PC-3 (cell line): ENCODE measurements at regions of chr18 and their contacts with region 1.

Region 1: GRCh38 chr18:26548429-26549262 is at the start of gene KCTD1:
- DNase-seq: peak; percentile 80
- ATAC-seq: peak; percentile 37
- H3K4me3 ChIP-seq: peak within 1 kb of the TSS; percentile 85
- H3K27ac ChIP-seq: peak within 1 kb of the TSS; percentile 12; the same call in 1 of the 2 replicates
- H3K4me1 ChIP-seq: peaks cover 45% of the 10 kb centered on the region
- H3K27me3 ChIP-seq: no peaks in the 10 kb centered on the region
- CTCF ChIP-seq: no peak
- total RNA-seq, gene KCTD1: 15.8 and 24.0 TPM in 2 replicates

Region 2: GRCh38 chr18:26090130-26091046 is 458.3 kb before region 1 on chr18 and contains the start of gene SS18:
- CTCF ChIA-PET with region 1: no interaction called
- POLR2A ChIA-PET with region 1: no interaction called
- intact Hi-C with region 1: loop called (anchors 2 kb)
- DNase-seq: peak; percentile 92
- ATAC-seq: peak; percentile 87
- H3K4me3 ChIP-seq: peak within 1 kb of the TSS; percentile 99
- H3K27ac ChIP-seq: peak within 1 kb of the TSS; percentile 73
- H3K4me1 ChIP-seq: peaks cover 20% of the 10 kb centered on the region
- H3K27me3 ChIP-seq: no peaks in the 10 kb centered on the region
- CTCF ChIP-seq: no peak
- total RNA-seq, gene SS18: 70.1 and 98.7 TPM in 2 replicates

Region 3: GRCh38 chr18:26405190-26405801 is 143.3 kb before region 1 on chr18:
- CTCF ChIA-PET with region 1: no interaction called
- POLR2A ChIA-PET with region 1: no interaction called
- intact Hi-C with region 1: loop called (anchors 2 kb)
- DNase-seq: peak; percentile 62
- ATAC-seq: peak; percentile 96
- H3K4me3 ChIP-seq: no peak overlapping the region
- H3K27ac ChIP-seq: no peak overlapping the region
- H3K4me1 ChIP-seq: no peaks in the 10 kb centered on the region
- H3K27me3 ChIP-seq: no peaks in the 10 kb centered on the region
- CTCF ChIP-seq: peak; percentile 77

Region 4: DNA sequence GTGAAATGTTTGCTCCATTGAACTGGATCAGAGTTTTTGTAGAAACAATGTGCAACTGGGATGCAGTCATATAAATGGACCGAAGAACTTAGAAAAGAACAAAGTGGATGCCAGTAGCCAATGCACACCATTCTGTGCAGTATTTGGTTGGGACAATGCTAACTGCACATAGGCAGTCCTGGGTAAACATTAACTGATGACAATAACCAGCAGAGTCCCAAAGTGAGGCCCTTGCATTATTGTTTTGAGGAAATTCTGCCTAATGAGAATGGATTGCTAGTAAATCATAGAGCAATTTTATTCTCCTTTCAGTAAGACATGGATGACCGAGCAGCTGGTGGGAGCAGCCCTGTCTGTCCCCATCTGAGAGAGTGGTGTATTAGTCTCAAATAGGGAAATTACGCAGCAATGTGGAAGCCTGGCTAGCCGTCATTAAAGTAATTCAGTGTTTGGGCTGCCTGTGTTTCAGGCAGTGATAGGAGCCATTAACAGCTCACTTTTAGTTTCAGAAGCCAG is 95.2 kb before region 1 on chr18:
- CTCF ChIA-PET with region 1: no interaction called
- POLR2A ChIA-PET with region 1: no interaction called
- intact Hi-C with region 1: no loop called
- DNase-seq: no peak
- ATAC-seq: no peak
- H3K4me3 ChIP-seq: no peak overlapping the region
- H3K27ac ChIP-seq: no peak overlapping the region
- H3K4me1 ChIP-seq: peaks cover 15% of the 10 kb centered on the region
- H3K27me3 ChIP-seq: no peaks in the 10 kb centered on the region
- CTCF ChIP-seq: no peak

Region 5: GRCh38 chr18:26480897-26481895 is 67.5 kb before region 1 on chr18:
- CTCF ChIA-PET with region 1: interaction called, 3 read pairs
- POLR2A ChIA-PET with region 1: interaction called, 17 read pairs
- intact Hi-C with region 1: loop called (anchors 2 kb)
- DNase-seq: peak; percentile 98
- ATAC-seq: peak; percentile 83
- H3K4me3 ChIP-seq: peak overlapping the region; percentile 48
- H3K27ac ChIP-seq: peak overlapping the region; percentile 97
- H3K4me1 ChIP-seq: peaks cover 73% of the 10 kb centered on the region
- H3K27me3 ChIP-seq: no peaks in the 10 kb centered on the region
- CTCF ChIP-seq: no peak

Region 6: GRCh38 chr18:26574958-26575864 is 26.6 kb after region 1 on chr18:
- CTCF ChIA-PET with region 1: no interaction called
- POLR2A ChIA-PET with region 1: no interaction called
- intact Hi-C with region 1: loop called (anchors 2 kb)
- DNase-seq: peak; percentile 56
- ATAC-seq: peak; percentile 40
- H3K4me3 ChIP-seq: peak overlapping the region; percentile 63
- H3K27ac ChIP-seq: peak overlapping the region; percentile 73
- H3K4me1 ChIP-seq: peaks cover 27% of the 10 kb centered on the region
- H3K27me3 ChIP-seq: no peaks in the 10 kb centered on the region
- CTCF ChIP-seq: no peak

Region 7: GRCh38 chr18:26746279-26747150 is 197.9 kb after region 1 on chr18:
- CTCF ChIA-PET with region 1: no interaction called
- POLR2A ChIA-PET with region 1: no interaction called
- intact Hi-C with region 1: loop called (anchors 5 kb)
- DNase-seq: peak; percentile 67
- ATAC-seq: peak; percentile 58
- H3K4me3 ChIP-seq: peak overlapping the region; percentile 53
- H3K27ac ChIP-seq: peak overlapping the region; percentile 94
- H3K4me1 ChIP-seq: peaks cover 45% of the 10 kb centered on the region
- H3K27me3 ChIP-seq: no peaks in the 10 kb centered on the region
- CTCF ChIP-seq: no peak